Naive thymus-derived CD4-positive, alpha-beta T cell (primary cell): ENCODE measurements at regions of chr2 and their contacts with region 1.

Region 1: DNA sequence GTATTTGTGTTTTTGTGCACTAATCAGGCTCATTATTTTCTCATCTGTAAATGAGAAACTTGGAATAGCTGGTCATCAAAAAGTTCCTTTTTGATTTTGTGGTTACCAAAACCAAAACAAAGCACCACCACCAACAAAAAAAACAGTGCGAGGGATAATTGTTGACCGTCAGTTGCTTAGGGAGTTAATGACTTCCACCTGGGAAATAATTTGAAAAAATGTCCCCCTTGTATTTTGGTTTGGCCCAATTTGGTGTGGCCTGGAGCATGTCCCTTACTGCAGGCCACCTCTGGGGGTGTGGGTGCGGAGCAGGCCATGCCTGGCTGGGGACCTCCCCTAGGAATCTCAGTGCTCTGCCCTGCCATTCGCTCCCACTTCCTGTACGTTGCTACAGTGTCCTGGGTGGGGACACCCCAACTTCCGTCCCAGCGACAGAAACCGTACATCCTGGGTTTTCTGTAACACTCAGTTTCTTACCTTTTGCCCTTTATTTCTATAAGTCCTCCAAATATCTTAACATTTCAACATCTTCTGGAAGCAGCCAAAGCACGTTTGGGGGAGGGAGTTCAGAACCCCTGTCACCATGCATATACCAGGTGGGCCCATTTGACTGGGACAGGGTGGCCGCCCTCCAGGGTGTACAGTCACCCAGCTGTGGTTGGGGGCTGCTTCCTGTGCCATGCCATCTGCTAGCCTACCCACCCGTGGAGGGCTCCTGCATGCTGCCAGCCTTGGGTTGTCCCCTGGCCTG is 31.3 kb downstream of the NCK2 start:
- DNase-seq: peak in 5 of 9 donors; percentile 36 to 48 (median 41)
- ATAC-seq: peak; percentile 71
- H3K4me3 ChIP-seq: peak overlapping the region; percentile 53
- H3K4me3 Mint-ChIP-seq: peak overlapping the region; percentile 71 to 93 (median 84)
- H3K27ac ChIP-seq: peak overlapping the region; percentile 85
- H3K27ac Mint-ChIP-seq: peak overlapping the region; percentile 83 to 98 (median 92)
- H3K4me1 ChIP-seq: peaks cover 87 to 88% of the 10 kb centered on the region in 2 donors
- H3K4me1 Mint-ChIP-seq: peaks cover 79 to 97% (median 95%) of the 10 kb centered on the region in 7 donors
- H3K27me3 ChIP-seq: no peaks in the 10 kb centered on the region
- H3K27me3 Mint-ChIP-seq: no peaks in the 10 kb centered on the region

Region 2: GRCh38 chr2:105571445-105571987 is 204.5 kb before region 1 on chr2:
- CTCF ChIA-PET with region 1: interaction called, 10 read pairs
- POLR2A ChIA-PET with region 1: no interaction called
- intact Hi-C with region 1: loop called in 1 of 2 experiments (anchors 1 kb)
- DNase-seq: no peak
- ATAC-seq: no peak
- H3K4me3 ChIP-seq: no peak overlapping the region
- H3K4me3 Mint-ChIP-seq: peak overlapping the region in 1 of 10 donors; percentile 4
- H3K27ac ChIP-seq: no peak overlapping the region
- H3K27ac Mint-ChIP-seq: peak overlapping the region in 2 of 9 donors; percentile 32 to 57
- H3K4me1 ChIP-seq: peaks cover under 1 to 16% of the 10 kb centered on the region in 2 donors
- H3K4me1 Mint-ChIP-seq: peaks cover 10 to 39% (median 13%) of the 10 kb centered on the region in 7 donors
- H3K27me3 ChIP-seq: no peaks in the 10 kb centered on the region
- H3K27me3 Mint-ChIP-seq: peaks cover 0 to 26% (median 0%) of the 10 kb centered on the region in 5 donors

Region 3: GRCh38 chr2:105712981-105713596 is 62.9 kb before region 1 on chr2:
- CTCF ChIA-PET with region 1: no interaction called
- POLR2A ChIA-PET with region 1: no interaction called
- intact Hi-C with region 1: no loop called
- DNase-seq: no peak
- ATAC-seq: peak; percentile 29
- H3K4me3 ChIP-seq: no peak overlapping the region
- H3K4me3 Mint-ChIP-seq: no peak overlapping the region
- H3K27ac ChIP-seq: no peak overlapping the region
- H3K27ac Mint-ChIP-seq: peak overlapping the region in 1 of 9 donors; percentile 46
- H3K4me1 ChIP-seq: no peaks in the 10 kb centered on the region
- H3K4me1 Mint-ChIP-seq: peaks cover 0 to 8% (median 3%) of the 10 kb centered on the region in 7 donors
- H3K27me3 ChIP-seq: peaks cover 0 to 4% of the 10 kb centered on the region in 2 donors
- H3K27me3 Mint-ChIP-seq: peaks cover 0 to 18% (median 0%) of the 10 kb centered on the region in 5 donors

Region 4: GRCh38 chr2:105749583-105750400 is 26.2 kb before region 1 on chr2:
- CTCF ChIA-PET with region 1: interaction called, 6 read pairs
- POLR2A ChIA-PET with region 1: interaction called, 41 read pairs
- intact Hi-C with region 1: loop called (anchors 1 to 2 kb)
- DNase-seq: no peak
- ATAC-seq: peak; percentile 5
- H3K4me3 ChIP-seq: peak overlapping the region; percentile 94
- H3K4me3 Mint-ChIP-seq: peak overlapping the region; percentile 71 to 99 (median 93)
- H3K27ac ChIP-seq: peak overlapping the region; percentile 89
- H3K27ac Mint-ChIP-seq: peak overlapping the region; percentile 92 to 99 (median 97)
- H3K4me1 ChIP-seq: peaks cover 67 to 74% of the 10 kb centered on the region in 2 donors
- H3K4me1 Mint-ChIP-seq: peaks cover 53 to 85% (median 81%) of the 10 kb centered on the region in 7 donors
- H3K27me3 ChIP-seq: no peaks in the 10 kb centered on the region
- H3K27me3 Mint-ChIP-seq: no peaks in the 10 kb centered on the region

Region 5: GRCh38 chr2:105789745-105790460 is 13.9 kb after region 1 on chr2:
- CTCF ChIA-PET with region 1: interaction called, 5 read pairs
- POLR2A ChIA-PET with region 1: interaction called, 11 read pairs
- intact Hi-C with region 1: no loop called
- DNase-seq: peak in 6 of 9 donors; percentile 38 to 78 (median 53)
- ATAC-seq: peak; percentile 79
- H3K4me3 ChIP-seq: peak overlapping the region; percentile 38
- H3K4me3 Mint-ChIP-seq: peak overlapping the region; percentile 52 to 89 (median 72)
- H3K27ac ChIP-seq: peak overlapping the region; percentile 63
- H3K27ac Mint-ChIP-seq: peak overlapping the region; percentile 81 to 99 (median 92)
- H3K4me1 ChIP-seq: peaks cover 86 to 92% of the 10 kb centered on the region in 2 donors
- H3K4me1 Mint-ChIP-seq: peaks cover 62 to 100% (median 94%) of the 10 kb centered on the region in 7 donors
- H3K27me3 ChIP-seq: no peaks in the 10 kb centered on the region
- H3K27me3 Mint-ChIP-seq: no peaks in the 10 kb centered on the region

Region 6: DNA sequence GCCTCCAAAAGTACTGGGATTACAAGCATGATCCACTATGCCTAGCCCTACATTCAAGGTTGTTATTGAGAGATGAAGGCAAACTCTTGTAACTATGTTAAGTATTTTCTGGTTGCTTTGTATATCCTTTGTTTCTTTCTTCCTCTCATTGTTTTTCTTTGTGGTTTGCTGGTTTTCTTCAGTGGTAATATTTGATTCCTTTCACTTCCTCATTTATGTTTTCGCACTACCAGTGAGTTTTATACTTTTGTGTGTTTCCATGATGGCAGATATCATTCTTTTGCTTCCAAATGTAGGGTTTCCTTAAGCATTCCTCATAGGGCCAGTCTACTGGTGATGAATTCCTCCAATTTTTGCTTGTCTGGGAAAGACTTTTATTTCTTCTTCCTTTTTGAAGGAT is 58.9 kb after region 1 on chr2:
- CTCF ChIA-PET with region 1: no interaction called
- POLR2A ChIA-PET with region 1: interaction called, 3 read pairs
- intact Hi-C with region 1: loop called in 1 of 2 experiments (anchors 2 kb)
- DNase-seq: peak in 6 of 9 donors; percentile 56 to 80 (median 70)
- ATAC-seq: peak; percentile 59
- H3K4me3 ChIP-seq: no peak overlapping the region
- H3K4me3 Mint-ChIP-seq: peak overlapping the region; percentile 0 to 54 (median 30)
- H3K27ac ChIP-seq: peak overlapping the region; percentile 61
- H3K27ac Mint-ChIP-seq: peak overlapping the region; percentile 40 to 95 (median 78)
- H3K4me1 ChIP-seq: peaks cover 43 to 49% of the 10 kb centered on the region in 2 donors
- H3K4me1 Mint-ChIP-seq: peaks cover 45 to 96% (median 87%) of the 10 kb centered on the region in 7 donors
- H3K27me3 ChIP-seq: no peaks in the 10 kb centered on the region
- H3K27me3 Mint-ChIP-seq: no peaks in the 10 kb centered on the region